ENCODE measurements at regions of chrX and their contacts with region 1.

Region 1: GRCh38 chrX:49242545-49243066 is 7.3 kb downstream of the CCDC22 start:
- DNase-seq: no peak
- H3K4me3 ChIP-seq: no peak overlapping the region
- H3K27ac ChIP-seq: no peak overlapping the region
- H3K4me1 ChIP-seq: no peaks in the 10 kb centered on the region
- H3K27me3 ChIP-seq: peaks cover 0 to 19% of the 10 kb centered on the region in 2 donors
- CTCF ChIP-seq: no peak
- POLR2A ChIP-seq: no peak

Region 2: DNA sequence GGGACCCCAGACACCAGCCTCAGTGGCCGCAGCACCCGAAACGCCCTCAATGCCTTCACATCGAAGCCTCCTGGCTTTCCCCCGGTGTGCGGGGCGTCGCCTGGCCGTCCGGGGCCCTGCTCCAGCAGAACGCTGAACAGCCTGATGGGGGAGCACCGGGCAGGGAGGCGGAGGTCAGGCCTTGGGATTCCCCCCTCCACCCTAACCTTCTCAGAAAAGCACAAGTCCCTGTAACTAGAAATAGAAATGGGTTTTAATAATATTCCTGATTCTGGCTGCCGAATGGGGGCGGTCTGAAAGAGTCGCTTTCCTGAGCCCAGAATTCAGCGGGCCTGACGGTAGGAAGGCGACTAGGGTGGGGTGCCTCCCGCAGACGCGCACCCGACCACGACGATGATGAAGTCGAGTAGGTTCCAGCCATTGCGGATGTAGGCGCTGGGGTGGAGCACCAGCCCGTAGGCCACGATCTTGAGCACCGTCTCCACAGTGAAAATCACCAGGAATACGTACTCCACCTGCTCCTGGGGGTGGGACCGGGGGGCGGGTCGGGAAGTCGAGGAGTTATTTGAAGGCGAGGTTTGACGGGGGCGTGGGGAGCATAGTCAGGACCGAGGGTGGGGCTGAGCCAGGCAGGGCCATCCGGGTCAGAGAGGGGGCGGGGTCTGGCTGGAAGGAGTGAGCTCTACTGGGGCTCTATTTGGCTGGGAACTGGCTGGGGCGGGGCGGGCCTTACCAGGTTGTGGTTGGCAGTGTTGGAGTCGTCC is 12.0 kb before region 1 on chrX:
- intact Hi-C with region 1: no loop called
- DNase-seq: peak; percentile 57 to 79
- H3K4me3 ChIP-seq: peak overlapping the region; percentile 22 to 60 (median 39)
- H3K27ac ChIP-seq: peak overlapping the region; percentile 2 to 54
- H3K4me1 ChIP-seq: no peaks in the 10 kb centered on the region
- H3K27me3 ChIP-seq: peaks cover 0 to 22% of the 10 kb centered on the region in 2 donors
- CTCF ChIP-seq: peak in 1 of 3 donors; percentile 33
- POLR2A ChIP-seq: no peak

Region 3: DNA sequence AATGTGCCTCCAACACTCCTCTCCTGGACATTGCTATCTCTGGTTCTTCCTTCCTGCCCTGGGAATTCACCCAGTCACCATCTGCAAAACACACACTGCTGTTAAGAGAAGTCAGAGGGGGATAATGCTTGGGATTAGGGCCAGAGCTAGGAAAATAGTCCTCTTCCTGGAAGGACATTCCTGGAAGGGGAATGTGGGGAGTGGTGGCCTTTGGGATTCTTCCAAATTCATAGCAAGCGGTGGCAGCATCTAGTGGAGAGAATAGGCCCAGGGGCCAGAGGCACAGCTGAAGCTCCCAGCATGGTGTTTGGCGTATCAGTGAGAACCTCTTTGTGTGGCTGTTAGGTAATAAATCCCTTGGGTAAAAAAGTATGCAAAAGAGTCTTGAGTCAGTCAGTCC is 1537.1 kb after region 1 on chrX:
- intact Hi-C with region 1: loop called (anchors 5 kb)
- DNase-seq: no peak
- H3K4me3 ChIP-seq: no peak overlapping the region
- H3K27ac ChIP-seq: no peak overlapping the region
- H3K4me1 ChIP-seq: no peaks in the 10 kb centered on the region
- H3K27me3 ChIP-seq: peaks cover 0 to 17% of the 10 kb centered on the region in 2 donors
- CTCF ChIP-seq: no peak
- POLR2A ChIP-seq: no peak